Heart right ventricle (tissue), 16 donors: ENCODE measurements at regions of chr10 and their contacts with region 1.

Region 1: DNA sequence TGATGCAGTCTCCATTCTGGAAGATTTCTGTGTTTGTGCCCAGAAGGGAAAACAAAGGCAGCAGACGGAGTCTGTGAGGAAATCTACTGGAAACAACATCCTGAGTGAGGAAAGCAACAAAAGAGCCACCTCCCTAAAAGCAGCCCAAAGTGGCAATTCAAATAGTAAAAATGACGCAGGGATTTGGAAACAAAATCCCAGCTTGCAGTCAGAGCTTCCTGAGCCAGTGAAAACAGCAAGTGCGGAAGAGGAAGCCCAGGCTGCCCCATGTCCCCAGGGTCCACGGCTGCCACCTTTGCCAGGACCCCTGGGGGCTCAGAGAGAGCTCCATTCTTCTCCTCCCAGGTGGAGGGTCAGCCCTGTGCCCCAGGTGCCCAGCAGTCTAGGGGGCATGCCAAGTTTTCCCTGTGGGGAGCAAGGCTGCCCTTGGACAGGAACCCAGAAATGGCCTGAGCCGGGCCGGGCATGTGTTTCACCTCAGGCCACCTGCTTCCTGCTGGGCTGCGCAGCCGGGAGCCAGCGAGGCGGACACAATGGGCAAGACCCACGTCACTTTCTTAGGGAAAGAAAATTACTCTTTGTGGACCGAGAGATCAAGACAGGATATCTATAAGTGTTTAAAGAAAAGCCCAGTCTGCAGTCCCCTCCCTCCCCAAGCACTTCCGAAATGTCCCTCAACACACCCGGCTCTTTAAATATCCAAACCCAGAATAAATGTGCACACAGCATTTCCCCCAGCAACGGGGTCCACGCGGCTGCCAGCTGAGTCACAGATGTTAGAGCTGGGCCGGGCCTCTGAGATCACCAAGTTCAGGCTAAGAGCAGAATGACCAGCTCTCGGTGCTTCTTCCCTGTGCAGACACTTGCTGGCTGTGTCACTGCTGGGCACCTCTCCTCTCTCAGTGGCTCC is 231.1 kb downstream of the ARHGAP12 start:
- DNase-seq: peak; percentile 85 to 90
- ATAC-seq: peak; percentile 80 to 91 (median 88)
- H3K4me3 ChIP-seq: peak overlapping the region in 8 of 10 donors; percentile 4 to 38 (median 28)
- H3K27ac ChIP-seq: peak overlapping the region; percentile 91 to 99 (median 96)
- H3K4me1 ChIP-seq: peaks cover 33 to 90% (median 69%) of the 10 kb centered on the region in 9 donors
- H3K27me3 ChIP-seq: no peaks in the 10 kb centered on the region
- CTCF ChIP-seq: no peak

Region 2: GRCh38 chr10:30829909-30830308 is 867.6 kb before region 1 on chr10:
- intact Hi-C with region 1: no loop called
- DNase-seq: no peak
- ATAC-seq: no peak
- H3K4me3 ChIP-seq: no peak overlapping the region
- H3K27ac ChIP-seq: no peak overlapping the region
- H3K4me1 ChIP-seq: peaks cover 0 to 20% (median 15%) of the 10 kb centered on the region in 9 donors
- H3K27me3 ChIP-seq: no peaks in the 10 kb centered on the region
- CTCF ChIP-seq: no peak

Region 3: DNA sequence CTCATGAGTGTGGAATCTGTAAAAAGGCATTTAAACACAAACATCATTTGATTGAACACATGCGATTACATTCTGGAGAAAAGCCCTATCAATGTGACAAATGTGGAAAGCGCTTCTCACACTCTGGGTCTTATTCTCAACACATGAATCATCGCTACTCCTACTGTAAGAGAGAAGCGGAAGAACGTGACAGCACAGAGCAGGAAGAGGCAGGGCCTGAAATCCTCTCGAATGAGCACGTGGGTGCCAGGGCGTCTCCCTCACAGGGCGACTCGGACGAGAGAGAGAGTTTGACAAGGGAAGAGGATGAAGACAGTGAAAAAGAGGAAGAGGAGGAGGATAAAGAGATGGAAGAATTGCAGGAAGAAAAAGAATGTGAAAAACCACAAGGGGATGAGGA is 170.8 kb before region 1 on chr10:
- intact Hi-C with region 1: loop called in 3 of 10 experiments (anchors 10 kb)
- DNase-seq: no peak
- ATAC-seq: no peak
- H3K4me3 ChIP-seq: no peak overlapping the region
- H3K27ac ChIP-seq: peak overlapping the region in 5 of 10 donors; percentile 31 to 49 (median 36)
- H3K4me1 ChIP-seq: peaks cover 0 to 31% (median 7%) of the 10 kb centered on the region in 9 donors
- H3K27me3 ChIP-seq: no peaks in the 10 kb centered on the region
- CTCF ChIP-seq: no peak

Region 4: DNA sequence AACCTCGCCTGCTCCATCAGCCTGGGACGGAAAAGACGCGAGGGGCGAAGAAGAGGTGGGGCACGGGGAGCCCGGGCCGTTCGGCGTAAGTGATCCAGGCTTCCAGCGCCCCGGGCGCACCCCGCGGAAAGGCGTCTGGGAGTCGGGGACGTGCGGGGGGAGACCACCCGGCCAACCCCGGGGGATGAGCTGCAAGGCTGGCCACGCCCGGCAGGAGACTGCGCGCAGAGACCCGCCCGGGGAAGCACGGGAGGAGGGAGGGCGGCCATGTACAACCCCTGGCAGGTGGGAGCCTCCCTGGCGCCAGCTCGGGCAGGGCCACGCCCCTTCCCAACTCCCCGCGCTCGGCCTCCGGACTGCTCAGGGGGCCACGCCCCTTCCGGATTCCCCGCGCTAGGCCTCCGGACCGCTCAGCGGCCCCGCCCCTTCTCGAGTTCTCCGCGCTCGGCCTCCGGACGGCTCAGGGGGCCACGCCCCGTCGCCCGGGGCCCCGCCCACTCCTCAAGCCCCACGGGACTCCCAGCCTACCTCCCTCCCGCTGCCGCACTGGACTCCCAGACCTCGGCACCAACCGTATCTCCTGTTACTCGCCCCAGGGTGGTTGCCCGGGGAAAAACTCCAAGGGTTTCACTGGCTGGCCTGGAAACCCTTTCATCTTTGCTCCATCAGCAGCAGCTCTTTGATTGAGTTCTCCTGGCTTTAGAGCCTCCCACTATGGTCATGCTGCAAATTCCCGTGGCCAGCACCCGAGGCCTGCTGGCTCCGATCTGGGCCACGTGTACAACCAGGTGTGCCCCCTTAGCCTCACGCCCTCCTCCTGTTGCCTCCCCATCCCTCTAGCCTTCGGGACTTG is 94.1 kb before region 1 on chr10:
- intact Hi-C with region 1: loop called in 4 of 10 experiments (anchors 1 to 5 kb)
- DNase-seq: peak; percentile 96 to 97
- ATAC-seq: peak; percentile 94 to 98 (median 96)
- H3K4me3 ChIP-seq: peak overlapping the region; percentile 48 to 76 (median 64)
- H3K27ac ChIP-seq: peak overlapping the region; percentile 74 to 95 (median 90)
- H3K4me1 ChIP-seq: peaks cover 0 to 46% (median 17%) of the 10 kb centered on the region in 9 donors
- H3K27me3 ChIP-seq: no peaks in the 10 kb centered on the region
- CTCF ChIP-seq: peak in 1 of 9 donors; percentile 13

Region 5: GRCh38 chr10:31620226-31621151 is 77.0 kb before region 1 on chr10:
- intact Hi-C with region 1: loop called in 1 of 10 experiments (anchors 10 kb)
- DNase-seq: peak; percentile 70 to 87
- ATAC-seq: peak; percentile 47 to 79 (median 65)
- H3K4me3 ChIP-seq: no peak overlapping the region
- H3K27ac ChIP-seq: peak overlapping the region in 9 of 10 donors; percentile 24 to 79 (median 64)
- H3K4me1 ChIP-seq: peaks cover 8 to 61% (median 37%) of the 10 kb centered on the region in 9 donors
- H3K27me3 ChIP-seq: no peaks in the 10 kb centered on the region
- CTCF ChIP-seq: peak in 8 of 9 donors; percentile 16 to 58 (median 42)